Cardiac septum (tissue), 1 donor: ENCODE measurements at regions of chr17 and their contacts with region 1.

Region 1: DNA sequence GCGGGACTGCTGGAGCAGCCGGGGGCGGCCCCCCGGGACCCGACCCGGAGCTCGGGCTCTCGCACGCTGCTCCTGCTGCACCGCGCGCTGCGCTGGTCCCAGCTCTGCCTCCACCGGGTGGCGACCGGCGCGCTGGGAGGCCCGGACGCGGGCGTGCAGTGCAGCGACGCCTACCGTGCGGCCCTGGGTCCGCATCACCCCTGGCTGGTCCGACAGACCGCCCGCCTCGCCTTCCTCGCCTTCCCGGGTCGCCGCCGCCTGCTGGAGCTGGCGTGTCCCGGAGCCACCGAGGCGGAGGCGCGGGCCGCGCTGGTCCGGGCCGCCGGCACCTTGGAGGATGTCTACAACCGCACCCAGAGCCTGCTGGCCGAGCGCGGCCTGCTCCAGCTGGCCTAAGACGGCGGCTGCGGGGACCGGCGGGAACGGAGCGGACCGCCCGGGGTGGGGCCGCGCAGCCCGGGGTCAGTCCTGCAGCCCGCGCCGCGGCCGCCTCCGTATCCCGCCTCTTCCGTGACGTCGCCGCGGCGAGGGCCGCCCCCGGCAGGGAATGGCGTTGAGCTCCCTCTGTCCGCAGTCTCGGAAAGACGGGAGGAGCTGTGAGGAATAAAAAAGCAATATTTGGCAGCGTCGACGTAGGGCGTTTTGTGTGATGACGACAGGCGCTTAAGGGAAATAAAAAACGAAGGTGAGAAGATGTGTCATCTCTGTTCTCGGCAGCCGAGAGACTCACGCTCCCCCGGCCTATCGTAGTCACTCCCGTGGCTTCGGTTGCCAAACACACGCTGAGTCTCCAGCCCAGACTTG is 1.3 kb downstream of the GLTPD2 start:
- DNase-seq: peak; percentile 94

Region 2: GRCh38 chr17:4709794-4710692 is 80.1 kb before region 1 on chr17 and contains the start of gene ARRB2:
- intact Hi-C with region 1: loop called (anchors 5 kb)
- DNase-seq: peak; percentile 100
- total RNA-seq, gene ARRB2: 20.8 TPM

Region 3: DNA sequence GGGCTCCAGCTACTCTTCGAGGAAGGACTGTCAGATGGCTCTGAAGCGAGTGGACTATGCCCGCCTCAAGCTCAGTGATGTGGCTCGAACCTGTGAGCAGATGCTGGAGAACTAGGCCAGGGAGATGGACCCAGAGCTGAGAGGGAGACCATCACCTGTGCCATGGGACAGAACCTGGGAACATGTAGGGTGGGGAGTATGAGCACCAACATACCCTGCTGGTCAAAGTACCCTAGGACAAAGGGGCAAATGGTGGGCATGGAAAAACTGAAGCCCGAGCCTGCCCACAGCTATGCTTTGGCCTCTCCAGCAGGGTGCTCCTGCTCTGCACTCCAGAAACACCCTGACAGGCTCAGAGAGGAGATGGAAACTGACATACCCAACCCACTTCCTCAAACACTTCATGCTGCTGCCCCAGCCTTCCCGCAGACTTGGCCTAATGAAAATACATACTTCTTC is 57.0 kb before region 1 on chr17:
- intact Hi-C with region 1: loop called (anchors 5 kb)
- DNase-seq: no peak

Region 4: GRCh38 chr17:4751932-4752331 is 38.2 kb before region 1 on chr17:
- intact Hi-C with region 1: no loop called
- DNase-seq: no peak

Region 5: DNA sequence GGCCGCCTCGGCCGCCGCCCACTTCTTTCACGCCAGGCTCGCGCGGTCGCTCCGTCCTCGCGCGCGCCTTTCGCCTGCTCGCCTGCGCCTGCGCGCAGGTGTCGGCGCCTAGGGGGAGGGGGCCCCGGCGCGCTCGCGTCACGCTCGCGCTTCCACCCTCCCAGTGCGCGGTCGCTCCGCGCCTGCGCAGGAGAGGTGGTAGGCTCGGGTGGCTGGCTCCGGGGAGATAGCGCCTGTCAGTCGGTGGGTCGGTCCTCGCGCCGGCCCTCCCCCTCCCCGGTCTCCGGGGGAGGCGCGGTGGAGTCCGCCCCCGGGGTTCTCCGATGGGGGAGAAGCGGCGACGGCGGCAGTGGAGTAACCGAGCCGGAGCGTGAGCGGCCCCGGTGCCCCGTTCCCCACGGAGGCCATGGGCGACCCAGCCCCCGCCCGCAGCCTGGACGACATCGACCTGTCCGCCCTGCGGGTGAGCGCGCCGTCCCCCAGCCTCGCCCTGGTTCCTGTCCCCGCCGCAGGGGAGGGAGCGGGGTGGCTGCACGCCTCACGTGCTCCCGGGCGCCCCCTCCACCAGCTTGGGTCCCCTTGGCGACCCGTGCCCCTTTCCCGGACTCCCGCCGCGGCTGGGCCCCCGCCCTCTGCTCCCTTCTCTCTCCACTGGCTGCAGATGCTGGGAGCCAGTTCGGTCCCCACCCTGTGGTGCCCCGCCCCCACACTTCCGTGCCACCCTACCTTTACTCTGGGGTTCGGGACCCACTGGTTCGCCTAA is 43.3 kb after region 1 on chr17 and contains the start of gene MINK1:
- intact Hi-C with region 1: loop called (anchors 1 kb)
- DNase-seq: peak; percentile 95
- total RNA-seq, gene MINK1: 44.0 TPM

Region 6: GRCh38 chr17:4858882-4859260 is 68.8 kb after region 1 on chr17:
- intact Hi-C with region 1: loop called (anchors 2 kb)
- DNase-seq: peak; percentile 82

Region 7: GRCh38 chr17:4881761-4882555 is 91.9 kb after region 1 on chr17:
- intact Hi-C with region 1: loop called (anchors 2 kb)
- DNase-seq: no peak

Region 8: GRCh38 chr17:4891411-4892342 is 101.6 kb after region 1 on chr17:
- intact Hi-C with region 1: loop called (anchors 2 kb)
- DNase-seq: no peak